ENCODE measurements at regions of chr22 and their contacts with region 1.

Region 1: GRCh38 chr22:26522592-26522991 is 10.3 kb upstream of the TFIP11 start:
- DNase-seq: no peak
- CTCF ChIP-seq: no peak

Region 2: GRCh38 chr22:26393929-26394328 is 128.7 kb before region 1 on chr22:
- CTCF ChIA-PET with region 1: no interaction called
- POLR2A ChIA-PET with region 1: no interaction called
- DNase-seq: no peak
- CTCF ChIP-seq: no peak

Region 3: DNA sequence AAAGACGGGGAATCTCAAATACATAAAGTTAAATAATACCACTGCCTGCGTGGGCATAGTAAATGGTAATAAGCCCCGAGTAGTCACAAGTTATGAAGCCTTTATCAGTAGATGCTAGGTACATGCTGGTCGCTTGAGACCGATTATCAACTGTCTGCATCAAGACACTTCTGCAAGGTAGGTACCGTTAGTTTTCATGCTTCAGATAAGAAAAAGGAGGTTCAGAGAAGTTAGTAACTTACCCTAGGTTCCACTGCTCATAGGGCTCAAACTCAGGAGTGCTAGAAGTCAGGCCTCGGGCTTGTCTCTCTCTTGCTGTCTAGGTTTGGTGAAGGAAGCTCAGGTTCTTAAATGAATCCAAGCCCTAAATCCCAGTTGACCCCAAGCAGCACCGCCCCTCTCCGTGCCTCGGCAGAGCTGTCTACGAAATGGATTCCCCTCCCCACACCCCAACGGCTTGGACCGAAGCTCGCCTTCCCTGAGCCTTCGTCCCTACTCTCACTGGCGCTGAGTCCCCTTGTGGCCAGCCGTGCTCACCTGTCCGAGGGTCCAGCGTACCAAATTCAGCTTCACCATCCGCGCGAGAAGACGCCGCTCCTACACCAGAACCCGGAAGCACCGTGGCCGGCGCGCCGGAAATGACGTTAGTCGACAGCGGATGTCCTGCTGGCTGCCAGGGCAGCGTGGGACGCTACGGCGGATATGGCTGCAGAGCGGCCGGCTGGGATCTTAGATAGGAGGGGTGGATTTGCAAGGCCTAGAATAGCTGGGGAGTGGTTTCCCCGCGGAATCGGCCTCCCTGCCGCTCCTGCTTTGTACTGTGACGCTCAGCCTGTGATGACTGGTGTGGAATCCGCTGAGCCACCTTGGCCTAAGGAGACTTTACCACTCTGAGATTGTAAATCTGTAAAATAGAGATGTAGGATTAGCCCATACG is 10.5 kb before region 1 on chr22 and contains the start of gene TFIP11:
- CTCF ChIA-PET with region 1: interaction called, 10 read pairs
- POLR2A ChIA-PET with region 1: no interaction called
- DNase-seq: peak; percentile 97
- CTCF ChIP-seq: peak; percentile 10

Measured in GM10248 (cell line).